OCI-LY7 (cell line): ENCODE measurements at regions of chr15 and their contacts with region 1.

Region 1: GRCh38 chr15:65980824-65981456 is 111.6 kb downstream of the RAB11A start:
- DNase-seq: peak; percentile 53
- H3K4me3 ChIP-seq: no peak overlapping the region
- H3K27ac ChIP-seq: no peak overlapping the region
- H3K4me1 ChIP-seq: peaks cover 24% of the 10 kb centered on the region
- CTCF ChIP-seq: peak; percentile 81

Region 2: DNA sequence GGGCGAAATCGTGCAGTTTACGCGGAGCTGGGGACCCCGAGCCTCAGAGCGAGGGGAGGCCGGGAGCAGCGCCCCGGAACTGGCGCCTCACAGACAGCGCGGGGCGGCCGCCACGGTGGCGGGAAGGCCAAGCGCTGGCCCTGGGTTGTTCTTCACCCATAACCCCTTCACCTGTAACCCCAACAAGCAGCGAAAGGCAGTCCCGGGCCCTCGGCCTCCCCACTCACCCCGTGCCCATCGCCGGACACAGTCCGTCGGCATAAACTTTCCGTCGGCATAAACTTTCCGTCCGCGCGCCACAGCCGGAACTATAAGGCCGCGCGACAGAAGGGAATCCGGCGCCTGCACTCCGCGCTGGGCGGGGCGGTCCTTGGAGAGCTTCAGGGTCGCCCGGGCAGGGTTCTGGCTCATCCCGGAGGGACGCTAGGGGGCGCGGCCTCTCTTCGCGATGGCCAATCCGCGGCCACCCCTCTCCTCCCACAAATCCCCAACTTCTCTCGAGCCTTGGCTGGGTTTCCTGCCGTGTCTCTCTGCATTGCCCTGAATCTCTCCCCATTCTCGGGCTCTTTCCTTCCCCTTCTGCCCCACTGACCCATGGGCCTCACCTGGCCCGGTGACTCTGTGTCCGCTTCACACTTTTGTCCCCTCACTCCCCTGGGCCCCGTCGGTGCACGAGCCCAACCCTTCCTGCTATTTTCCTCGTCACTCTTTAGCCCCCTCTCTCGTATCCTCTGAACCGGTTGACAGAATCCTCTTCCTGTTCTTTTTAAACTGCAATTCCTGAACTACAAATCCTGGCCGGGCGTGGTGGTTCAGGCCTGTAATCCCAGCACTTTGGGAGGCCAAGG is 369.8 kb before region 1 on chr15 and contains the start of gene INTS14:
- CTCF ChIA-PET with region 1: interaction called, 5 read pairs
- POLR2A ChIA-PET with region 1: no interaction called
- intact Hi-C with region 1: loop called (anchors 5 kb)
- DNase-seq: peak; percentile 97
- H3K4me3 ChIP-seq: peak within 1 kb of the TSS; percentile 72
- H3K27ac ChIP-seq: peak within 1 kb of the TSS; percentile 41
- H3K4me1 ChIP-seq: peaks cover 30% of the 10 kb centered on the region
- CTCF ChIP-seq: peak; percentile 74
- total RNA-seq, gene INTS14: 28.1 and 46.7 TPM in 2 replicates

Region 3: GRCh38 chr15:66039117-66039871 is 58.4 kb after region 1 on chr15:
- CTCF ChIA-PET with region 1: no interaction called
- POLR2A ChIA-PET with region 1: no interaction called
- intact Hi-C with region 1: no loop called
- DNase-seq: no peak
- H3K4me3 ChIP-seq: no peak overlapping the region
- H3K27ac ChIP-seq: no peak overlapping the region
- H3K4me1 ChIP-seq: no peaks in the 10 kb centered on the region
- CTCF ChIP-seq: no peak

Region 4: DNA sequence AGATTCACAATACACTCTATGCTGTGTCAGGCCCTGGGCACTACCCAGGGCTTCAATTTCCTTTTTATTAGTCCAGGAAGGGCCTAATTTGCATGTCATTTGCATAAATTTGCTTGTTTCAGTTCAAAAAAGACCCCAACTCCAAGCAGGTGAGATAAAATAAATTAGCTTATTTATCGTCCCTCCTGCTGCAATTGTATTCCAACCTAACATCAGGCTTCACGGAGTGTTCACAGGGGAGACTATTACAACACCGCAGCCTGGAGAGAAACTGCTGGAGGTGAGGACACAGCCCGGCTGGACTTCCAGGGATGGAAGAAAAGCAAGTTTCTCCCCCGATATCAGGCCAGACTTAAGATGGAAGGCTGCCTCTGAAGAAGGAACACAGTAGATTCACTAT is 209.8 kb after region 1 on chr15:
- CTCF ChIA-PET with region 1: interaction called, 4 read pairs
- POLR2A ChIA-PET with region 1: interaction called, 3 read pairs
- intact Hi-C with region 1: loop called (anchors 1 kb)
- DNase-seq: no peak
- H3K4me3 ChIP-seq: no peak overlapping the region
- H3K27ac ChIP-seq: no peak overlapping the region
- H3K4me1 ChIP-seq: peaks cover 57% of the 10 kb centered on the region
- CTCF ChIP-seq: no peak

Region 5: GRCh38 chr15:66287461-66288057 is 306.6 kb after region 1 on chr15:
- CTCF ChIA-PET with region 1: interaction called, 9 read pairs
- POLR2A ChIA-PET with region 1: interaction called, 4 read pairs
- intact Hi-C with region 1: loop called (anchors 2 kb)
- DNase-seq: peak; percentile 61
- H3K4me3 ChIP-seq: no peak overlapping the region
- H3K27ac ChIP-seq: no peak overlapping the region
- H3K4me1 ChIP-seq: peaks cover 13% of the 10 kb centered on the region
- CTCF ChIP-seq: peak; percentile 88